RWPE1 (cell line): ENCODE measurements at regions of chr12 and their contacts with region 1.

Region 1: DNA sequence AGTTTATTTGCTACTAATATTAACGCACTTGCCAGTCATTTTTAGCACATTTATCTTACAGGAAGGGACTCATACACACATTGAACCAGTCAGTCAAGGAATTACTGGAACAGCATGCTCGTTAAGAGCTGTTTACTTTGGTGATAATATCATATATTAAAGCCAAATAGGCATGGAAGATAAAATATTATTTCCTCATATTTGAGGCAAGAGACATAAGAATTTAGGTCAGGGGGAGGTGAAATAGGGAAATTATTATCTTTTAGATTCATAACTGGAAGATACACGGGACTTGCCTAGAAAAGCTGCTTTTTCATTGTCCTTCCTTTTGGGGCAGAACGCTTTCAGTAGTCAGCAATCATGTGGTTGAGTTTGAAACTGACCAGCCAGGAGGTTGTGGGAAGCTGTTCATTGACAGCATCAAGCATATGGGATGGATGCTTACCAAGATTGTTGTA is 72.6 kb downstream of the NTN4 start:
- DNase-seq: no peak
- H3K27ac ChIP-seq: no peak overlapping the region
- CTCF ChIP-seq: no peak

Region 2: DNA sequence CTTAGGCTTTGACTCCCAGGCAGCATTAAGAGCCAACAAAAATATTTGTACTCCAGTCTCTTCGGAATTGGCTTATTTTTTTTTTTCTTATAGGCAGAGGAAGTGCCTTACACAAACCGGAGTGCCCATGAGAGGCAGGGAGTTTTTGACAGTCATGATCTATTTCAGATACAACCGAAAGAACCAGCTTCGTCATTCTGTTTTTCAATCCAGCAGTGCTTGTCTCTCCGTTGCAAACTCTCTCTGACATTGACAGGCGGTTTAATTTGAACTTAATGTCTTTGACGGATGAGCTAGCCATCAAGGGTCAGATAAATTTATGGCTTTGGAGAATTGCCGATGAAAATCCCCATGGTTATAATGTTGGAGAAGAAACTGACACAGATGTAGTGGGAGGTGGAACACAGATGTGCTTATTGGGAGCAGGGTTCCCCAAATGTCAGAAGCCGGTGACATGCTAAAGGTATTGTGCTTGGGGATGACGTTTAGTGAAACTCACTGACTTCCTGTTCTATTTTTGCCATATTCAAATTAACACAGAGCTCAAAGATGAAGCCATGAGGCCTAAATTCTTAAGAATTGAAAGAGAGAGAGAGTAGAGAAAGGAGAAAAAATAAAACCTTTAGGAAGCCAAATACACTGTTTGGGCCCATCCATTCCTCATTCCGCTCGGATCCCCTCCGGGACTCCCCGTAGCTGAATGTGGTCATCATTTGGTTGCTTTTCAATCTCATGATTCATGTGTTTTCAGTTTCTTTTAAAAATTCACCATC is 1510.0 kb before region 1 on chr12:
- CTCF ChIA-PET with region 1: no interaction called
- POLR2A ChIA-PET with region 1: no interaction called
- DNase-seq: no peak
- H3K27ac ChIP-seq: no peak overlapping the region
- CTCF ChIP-seq: no peak

Region 3: GRCh38 chr12:95694136-95694535 is 23.9 kb before region 1 on chr12:
- CTCF ChIA-PET with region 1: interaction called, 13 read pairs
- POLR2A ChIA-PET with region 1: no interaction called
- DNase-seq: no peak
- H3K27ac ChIP-seq: no peak overlapping the region
- CTCF ChIP-seq: no peak